ENCODE measurements at regions of chr6 and their contacts with region 1.

Region 1: GRCh38 chr6:82681119-82681714 is 317.6 kb downstream of the TPBG start:
- DNase-seq: peak; percentile 71
- ATAC-seq: peak; percentile 75
- H3K4me3 ChIP-seq: peak overlapping the region; percentile 35; the same call in 1 of the 2 replicates
- H3K27ac ChIP-seq: peak overlapping the region; percentile 97
- H3K4me1 ChIP-seq: peaks cover 29% of the 10 kb centered on the region
- H3K27me3 ChIP-seq: no peaks in the 10 kb centered on the region
- CTCF ChIP-seq: no peak

Region 2: DNA sequence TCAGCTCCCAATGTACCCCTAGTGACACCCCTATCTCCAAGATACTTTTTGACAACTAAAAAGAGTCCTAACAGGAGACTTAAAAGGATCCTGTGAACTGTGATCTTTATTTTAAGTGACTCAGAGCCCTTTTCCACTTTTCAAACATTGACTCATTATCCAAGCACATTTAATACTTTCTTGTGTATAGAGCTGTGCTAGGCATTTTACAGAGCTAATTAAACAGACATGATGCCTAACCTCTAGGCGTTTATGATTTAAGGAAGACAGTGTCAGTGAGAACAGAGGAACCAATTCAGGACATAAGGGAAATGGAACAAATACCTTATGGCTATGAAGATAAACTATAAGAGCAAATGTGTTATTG is 35.0 kb before region 1 on chr6:
- CTCF ChIA-PET with region 1: no interaction called
- POLR2A ChIA-PET with region 1: no interaction called
- intact Hi-C with region 1: loop called (anchors 1 kb)
- DNase-seq: peak; percentile 78
- ATAC-seq: peak; percentile 92
- H3K4me3 ChIP-seq: 0 out of 2 replicates have a peak overlapping the region, but pooled peaks have one; percentile 5
- H3K27ac ChIP-seq: peak overlapping the region; percentile 93
- H3K4me1 ChIP-seq: peaks cover 25% of the 10 kb centered on the region
- H3K27me3 ChIP-seq: no peaks in the 10 kb centered on the region
- CTCF ChIP-seq: no peak